ENCODE measurements at regions of chr6 and their contacts with region 1.

Region 1: GRCh38 chr6:90184334-90185298 is 112.0 kb downstream of the BACH2 start:
- DNase-seq: no peak
- H3K4me3 ChIP-seq: no peak overlapping the region
- H3K27ac ChIP-seq: no peak overlapping the region
- H3K4me1 ChIP-seq: no peaks in the 10 kb centered on the region
- H3K27me3 ChIP-seq: no peaks in the 10 kb centered on the region
- CTCF ChIP-seq: no peak
- POLR2A ChIP-seq: no peak

Region 2: GRCh38 chr6:90212274-90212673 is 27.7 kb after region 1 on chr6:
- intact Hi-C with region 1: loop called (anchors 1 kb)
- DNase-seq: no peak
- H3K4me3 ChIP-seq: no peak overlapping the region
- H3K27ac ChIP-seq: no peak overlapping the region
- H3K4me1 ChIP-seq: no peaks in the 10 kb centered on the region
- H3K27me3 ChIP-seq: no peaks in the 10 kb centered on the region
- CTCF ChIP-seq: no peak
- POLR2A ChIP-seq: no peak

Region 3: GRCh38 chr6:90350689-90351554 is 166.3 kb after region 1 on chr6:
- intact Hi-C with region 1: no loop called
- DNase-seq: no peak
- H3K4me3 ChIP-seq: no peak overlapping the region
- H3K27ac ChIP-seq: no peak overlapping the region
- H3K4me1 ChIP-seq: no peaks in the 10 kb centered on the region
- H3K27me3 ChIP-seq: no peaks in the 10 kb centered on the region
- CTCF ChIP-seq: no peak
- POLR2A ChIP-seq: no peak

Measured in breast epithelium (tissue), 4 donors.